ENCODE measurements at regions of chr15 and their contacts with region 1.

Region 1: GRCh38 chr15:80970018-80970658 is 19.5 kb downstream of the MESD start:
- DNase-seq: peak in 32 of 35 experiments; percentile 8 to 82 (median 47)
- ATAC-seq: peak; percentile 43 to 65 (median 56)
- H3K4me3 ChIP-seq: no peak overlapping the region
- H3K4me3 Mint-ChIP-seq: no peak overlapping the region
- H3K27ac ChIP-seq: no peak overlapping the region
- H3K27ac Mint-ChIP-seq: no peak overlapping the region
- H3K4me1 ChIP-seq: peaks cover 0 to 1% of the 10 kb centered on the region in 2 experiments
- H3K4me1 Mint-ChIP-seq: peaks cover 11 to 16% (median 13%) of the 10 kb centered on the region in 3 donors
- H3K27me3 ChIP-seq: no peaks in the 10 kb centered on the region
- H3K27me3 Mint-ChIP-seq: no peaks in the 10 kb centered on the region

Region 2: GRCh38 chr15:80455668-80456442 is 514.3 kb before region 1 on chr15:
- CTCF ChIA-PET with region 1: interaction called, 10 to 15 read pairs
- POLR2A ChIA-PET with region 1: no interaction called
- DNase-seq: peak in 33 of 35 experiments; percentile 6 to 80 (median 36)
- ATAC-seq: peak; percentile 43 to 69 (median 66)
- H3K4me3 ChIP-seq: no peak overlapping the region
- H3K4me3 Mint-ChIP-seq: no peak overlapping the region
- H3K27ac ChIP-seq: no peak overlapping the region
- H3K27ac Mint-ChIP-seq: peak overlapping the region in 1 of 2 donors; percentile 4
- H3K4me1 ChIP-seq: no peaks in the 10 kb centered on the region
- H3K4me1 Mint-ChIP-seq: peaks cover 0 to 7% (median 4%) of the 10 kb centered on the region in 3 donors
- H3K27me3 ChIP-seq: peaks cover 0 to 24% of the 10 kb centered on the region in 2 experiments
- H3K27me3 Mint-ChIP-seq: peaks cover 12 to 14% of the 10 kb centered on the region in 2 donors

Region 3: GRCh38 chr15:80567721-80568157 is 402.4 kb before region 1 on chr15:
- CTCF ChIA-PET with region 1: interaction called in 1 of 2 experiments, 10 read pairs
- POLR2A ChIA-PET with region 1: no interaction called
- DNase-seq: peak in 7 of 35 experiments; percentile 1 to 46 (median 5)
- ATAC-seq: no peak
- H3K4me3 ChIP-seq: no peak overlapping the region
- H3K4me3 Mint-ChIP-seq: no peak overlapping the region
- H3K27ac ChIP-seq: no peak overlapping the region
- H3K27ac Mint-ChIP-seq: no peak overlapping the region
- H3K4me1 ChIP-seq: no peaks in the 10 kb centered on the region
- H3K4me1 Mint-ChIP-seq: no peaks in the 10 kb centered on the region
- H3K27me3 ChIP-seq: peaks cover 0 to 30% of the 10 kb centered on the region in 2 experiments
- H3K27me3 Mint-ChIP-seq: peaks cover 24 to 26% of the 10 kb centered on the region in 2 donors

Region 4: DNA sequence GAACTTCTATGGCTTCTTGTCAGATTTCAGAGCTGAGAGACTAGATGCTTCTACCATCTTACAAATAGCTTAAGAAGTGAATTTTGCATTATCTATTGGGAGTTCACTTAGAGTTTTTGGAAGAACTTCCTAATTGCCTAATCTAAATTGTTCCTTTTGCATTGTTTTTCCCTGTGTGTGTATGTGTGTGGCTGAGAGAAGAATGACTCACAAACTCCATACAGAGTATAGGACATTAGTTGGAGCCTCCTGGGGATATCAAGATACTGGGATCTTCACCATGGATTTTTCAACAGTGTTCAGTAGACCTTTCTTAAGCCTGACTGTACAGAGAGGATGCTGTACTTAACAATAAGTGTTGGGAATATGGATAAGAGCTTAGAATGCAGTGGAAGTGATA is 41.5 kb after region 1 on chr15:
- CTCF ChIA-PET with region 1: no interaction called
- POLR2A ChIA-PET with region 1: no interaction called
- DNase-seq: no peak
- ATAC-seq: no peak
- H3K4me3 ChIP-seq: no peak overlapping the region
- H3K4me3 Mint-ChIP-seq: no peak overlapping the region
- H3K27ac ChIP-seq: no peak overlapping the region
- H3K27ac Mint-ChIP-seq: no peak overlapping the region
- H3K4me1 ChIP-seq: peaks cover 0 to 2% of the 10 kb centered on the region in 2 experiments
- H3K4me1 Mint-ChIP-seq: peaks cover 36 to 42% (median 41%) of the 10 kb centered on the region in 3 donors
- H3K27me3 ChIP-seq: no peaks in the 10 kb centered on the region
- H3K27me3 Mint-ChIP-seq: no peaks in the 10 kb centered on the region

Region 5: DNA sequence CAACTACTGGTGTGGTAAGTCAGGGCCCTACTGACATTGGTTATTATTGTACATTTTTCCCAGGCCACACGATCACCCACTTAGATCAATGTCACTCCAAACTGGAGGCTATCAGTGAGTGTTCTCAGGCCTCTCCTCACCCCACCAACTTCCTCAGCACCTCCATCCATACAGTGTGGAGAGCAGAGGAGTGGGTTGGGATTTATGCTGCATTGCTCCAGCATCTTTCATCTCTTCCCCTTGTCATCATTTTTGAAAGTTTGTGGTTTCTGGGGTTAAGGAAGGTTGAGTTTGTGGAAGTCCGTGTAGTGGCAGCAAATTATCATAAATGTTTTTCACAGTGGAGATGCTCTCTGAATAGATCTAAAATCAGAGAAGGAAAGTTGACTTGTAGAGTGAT is 90.8 kb after region 1 on chr15:
- CTCF ChIA-PET with region 1: no interaction called
- POLR2A ChIA-PET with region 1: no interaction called
- DNase-seq: no peak
- ATAC-seq: no peak
- H3K4me3 ChIP-seq: no peak overlapping the region
- H3K4me3 Mint-ChIP-seq: no peak overlapping the region
- H3K27ac ChIP-seq: no peak overlapping the region
- H3K27ac Mint-ChIP-seq: no peak overlapping the region
- H3K4me1 ChIP-seq: no peaks in the 10 kb centered on the region
- H3K4me1 Mint-ChIP-seq: no peaks in the 10 kb centered on the region
- H3K27me3 ChIP-seq: no peaks in the 10 kb centered on the region
- H3K27me3 Mint-ChIP-seq: peaks cover 0 to 2% of the 10 kb centered on the region in 2 donors

Measured in T-cell (primary cell).